ENCODE measurements at regions of chr12 and their contacts with region 1.

Region 1: DNA sequence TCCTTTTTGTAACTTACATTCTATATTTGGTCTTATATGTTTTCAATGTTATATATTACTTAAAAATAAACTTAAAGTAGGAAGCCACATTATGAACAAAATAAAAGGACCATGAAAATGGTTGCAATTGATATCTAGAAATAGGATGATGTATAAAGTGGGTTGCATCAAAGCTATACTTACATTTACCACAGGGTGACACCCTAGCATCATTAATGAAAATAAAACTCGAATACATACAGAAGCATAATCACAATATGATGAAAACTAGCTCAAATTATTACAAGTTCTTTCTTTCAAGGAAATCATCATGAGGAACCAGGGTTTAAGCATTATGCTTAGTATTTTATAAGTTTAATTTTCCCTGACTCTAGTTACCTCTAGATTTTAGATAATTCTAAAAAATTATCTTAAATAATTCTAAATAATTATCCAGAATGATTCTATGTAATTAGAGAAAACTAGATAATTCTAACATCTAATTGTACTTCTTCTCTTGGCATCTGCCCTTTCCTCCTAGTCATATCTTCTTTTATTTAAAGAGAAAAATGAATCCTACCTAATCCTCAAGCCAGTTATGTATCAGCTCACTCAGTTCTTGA is 31.2 kb downstream of the TAS2R7 start:
- DNase-seq: no peak
- H3K4me3 ChIP-seq: no peak overlapping the region
- H3K27ac ChIP-seq: no peak overlapping the region
- H3K4me1 ChIP-seq: no peaks in the 10 kb centered on the region
- H3K27me3 ChIP-seq: no peaks in the 10 kb centered on the region
- CTCF ChIP-seq: peak in 3 of 6 experiments; percentile 50 to 77 (median 70)
- POLR2A ChIP-seq: no peak

Region 2: DNA sequence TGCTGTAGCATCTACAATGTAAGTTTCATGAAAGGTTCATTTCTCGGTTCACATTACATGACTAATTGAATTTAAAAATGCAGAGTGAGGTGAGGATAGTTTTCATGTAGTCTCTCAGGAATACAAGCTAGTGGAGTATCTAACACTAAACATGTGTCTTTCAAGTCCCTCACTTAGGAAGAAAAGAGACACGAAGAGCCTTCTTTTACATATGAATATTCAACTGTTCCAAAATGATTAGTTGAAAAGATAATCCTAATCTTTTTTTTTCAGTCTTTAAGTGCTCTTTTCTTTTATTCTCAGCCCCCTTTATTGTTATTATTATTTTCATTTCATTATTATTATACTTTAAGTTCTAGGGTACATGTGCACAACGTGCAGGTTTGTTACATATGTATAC is 67.2 kb after region 1 on chr12:
- intact Hi-C with region 1: no loop called
- DNase-seq: no peak
- H3K4me3 ChIP-seq: no peak overlapping the region
- H3K27ac ChIP-seq: no peak overlapping the region
- H3K4me1 ChIP-seq: no peaks in the 10 kb centered on the region
- H3K27me3 ChIP-seq: no peaks in the 10 kb centered on the region
- CTCF ChIP-seq: no peak
- POLR2A ChIP-seq: no peak

Region 3: DNA sequence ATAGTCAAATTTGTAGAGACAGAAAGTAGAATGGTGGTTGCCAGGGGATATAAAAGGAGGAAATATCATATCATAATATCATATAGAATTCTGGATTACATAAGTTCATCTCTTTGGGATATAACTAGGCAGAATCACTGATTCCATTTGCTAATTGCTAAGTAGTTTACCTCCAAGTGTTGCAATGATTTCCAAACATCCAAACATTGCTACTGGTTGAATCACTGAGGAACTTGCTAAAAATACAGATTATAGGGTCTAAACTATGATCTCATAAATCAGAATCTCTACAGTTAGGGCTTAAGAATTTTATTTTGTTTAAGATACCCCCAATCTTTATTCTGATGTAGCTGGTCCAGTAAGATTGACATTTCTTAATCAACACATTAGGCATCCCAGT is 431.6 kb after region 1 on chr12:
- intact Hi-C with region 1: loop called (anchors 5 kb)
- DNase-seq: no peak
- H3K4me3 ChIP-seq: no peak overlapping the region
- H3K27ac ChIP-seq: no peak overlapping the region
- H3K4me1 ChIP-seq: no peaks in the 10 kb centered on the region
- H3K27me3 ChIP-seq: no peaks in the 10 kb centered on the region
- CTCF ChIP-seq: no peak
- POLR2A ChIP-seq: no peak

Region 4: GRCh38 chr12:11486623-11487444 is 715.6 kb after region 1 on chr12:
- intact Hi-C with region 1: loop called (anchors 5 kb)
- DNase-seq: peak; percentile 68 to 82
- H3K4me3 ChIP-seq: no peak overlapping the region
- H3K27ac ChIP-seq: no peak overlapping the region
- H3K4me1 ChIP-seq: peaks cover 0 to 7% of the 10 kb centered on the region in 2 donors
- H3K27me3 ChIP-seq: no peaks in the 10 kb centered on the region
- CTCF ChIP-seq: peak; percentile 87 to 95 (median 93)
- POLR2A ChIP-seq: no peak